HEK293 (cell line): ENCODE measurements at regions of chr2 and their contacts with region 1.

Region 1: DNA sequence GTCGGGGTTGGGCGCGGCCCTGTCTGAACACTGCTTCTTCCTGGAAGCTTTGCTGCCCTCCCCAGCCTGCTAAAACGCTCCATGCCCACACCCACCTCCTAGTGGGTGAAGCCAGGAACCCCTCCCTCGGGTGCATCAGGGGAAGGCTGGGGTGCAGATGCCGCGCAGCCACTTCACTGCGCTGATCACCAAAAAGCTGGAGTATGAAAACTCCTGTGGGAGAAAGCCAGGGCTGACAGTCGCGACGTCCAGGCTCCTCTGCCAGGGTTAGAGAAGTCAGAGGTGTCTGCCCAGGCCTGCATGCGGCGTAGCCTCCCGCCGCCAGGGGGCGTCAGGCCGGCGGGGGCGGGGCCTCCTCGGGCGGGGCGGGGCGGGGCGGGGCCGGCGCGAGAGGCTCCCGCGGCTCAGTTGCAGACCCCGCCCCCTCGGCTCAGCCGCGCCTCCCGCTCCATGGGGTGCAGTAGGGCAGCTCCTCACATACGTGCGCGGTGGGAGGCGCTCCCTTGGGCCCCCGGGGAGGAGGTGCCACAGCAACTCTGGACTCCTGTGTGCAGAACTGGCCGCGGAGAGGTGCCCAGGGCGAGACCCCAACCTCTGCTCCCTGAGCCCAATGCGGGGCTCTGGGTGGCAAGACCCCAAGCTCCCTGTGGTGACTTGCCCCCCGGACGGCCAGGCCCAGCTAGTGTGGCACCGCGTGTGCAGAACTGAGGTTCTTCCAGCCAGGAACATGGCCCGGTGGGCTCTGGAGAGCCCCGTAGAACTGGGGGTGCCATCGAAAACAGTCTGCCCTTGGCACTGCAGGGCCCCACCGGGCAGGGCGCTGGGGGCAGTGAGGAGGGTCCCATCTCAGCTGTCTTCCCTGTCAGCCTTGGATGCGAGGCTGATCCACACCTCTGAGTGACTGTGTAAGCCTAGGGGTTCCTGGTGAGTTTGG is 1.8 kb upstream of the RNPEPL1 start:
- H3K4me3 ChIP-seq: peak overlapping the region; percentile 38
- H3K27ac ChIP-seq: peak overlapping the region; percentile 76
- H3K4me1 ChIP-seq: peaks cover 4% of the 10 kb centered on the region
- CTCF ChIP-seq: peak; percentile 87

Region 2: DNA sequence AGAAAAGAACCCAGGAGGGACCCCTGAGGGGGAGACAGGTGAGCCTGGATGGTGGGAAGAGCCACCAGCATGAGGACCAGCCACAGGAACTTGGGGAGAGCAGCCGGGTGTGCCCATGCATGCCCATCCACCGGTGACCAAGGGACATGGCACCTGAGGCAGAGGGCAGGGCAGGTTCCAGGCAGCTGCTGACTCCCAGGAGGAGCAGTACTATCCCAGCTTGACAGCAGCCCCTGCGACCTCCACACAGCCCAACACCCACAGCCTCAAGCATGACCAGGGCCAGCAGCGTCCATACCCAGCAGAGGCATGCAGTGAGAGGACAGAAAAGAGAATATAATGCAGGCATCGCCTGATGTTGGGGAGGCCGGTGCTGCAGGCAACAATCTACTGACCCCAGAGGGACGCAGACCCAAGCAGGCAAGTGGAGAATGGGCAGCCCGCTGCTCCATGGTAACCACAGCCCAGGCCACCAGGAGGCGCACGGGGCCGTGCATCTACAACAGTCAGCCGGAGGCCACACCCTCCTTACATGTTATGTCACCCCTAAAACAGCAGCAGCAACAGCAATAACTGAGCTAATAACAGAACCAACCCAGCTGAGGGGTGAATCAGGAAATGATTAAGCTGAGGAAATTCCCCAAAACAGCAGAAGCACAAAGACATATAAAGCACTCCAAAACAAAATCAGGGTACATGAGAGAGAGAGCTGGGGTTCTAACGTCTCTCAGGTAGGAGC is 52.8 kb before region 1 on chr2:
- CTCF ChIA-PET with region 1: interaction called, 10 read pairs
- POLR2A ChIA-PET with region 1: no interaction called
- H3K4me3 ChIP-seq: no peak overlapping the region
- H3K27ac ChIP-seq: no peak overlapping the region
- H3K4me1 ChIP-seq: no peaks in the 10 kb centered on the region
- CTCF ChIP-seq: peak; percentile 67

Region 3: DNA sequence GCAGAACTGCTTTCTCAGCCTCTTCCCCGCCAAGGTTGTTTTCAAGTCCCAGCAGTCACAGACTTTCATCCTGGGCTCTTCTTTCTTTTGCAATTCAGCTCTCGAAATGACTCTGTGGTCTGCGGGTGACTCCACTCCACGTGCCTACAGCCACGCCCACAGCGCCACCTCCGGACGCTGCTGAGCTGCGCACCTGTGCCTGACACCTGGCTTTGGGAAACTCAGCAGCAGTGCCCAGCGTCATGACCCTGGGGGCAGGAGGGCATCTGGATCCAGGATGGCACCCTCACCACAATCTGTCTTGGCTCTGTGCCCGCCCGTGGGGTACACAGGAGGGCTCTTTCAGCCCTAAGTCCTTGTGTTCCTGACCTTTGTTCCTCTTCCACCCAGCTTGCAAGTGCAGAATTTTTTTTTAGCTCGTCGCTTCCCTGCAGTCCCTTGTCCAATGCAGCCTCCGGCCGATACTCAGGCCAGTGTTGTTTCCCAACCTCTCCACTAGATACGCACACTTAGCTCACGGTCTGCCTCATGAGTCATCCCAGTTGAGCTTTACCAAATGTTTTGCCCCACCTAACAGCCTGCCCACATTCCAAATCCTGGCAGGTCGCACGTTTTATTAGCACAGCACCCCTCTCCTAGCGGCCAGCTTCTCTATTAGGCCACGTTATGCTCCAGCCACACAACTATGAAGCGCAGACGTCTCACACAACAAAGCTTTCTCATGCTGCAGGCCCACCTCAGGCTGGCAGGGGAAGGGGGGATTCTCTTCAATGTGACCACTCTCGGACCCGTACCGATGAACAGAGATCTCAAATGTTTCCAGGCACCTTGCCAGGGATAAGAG is 13.5 kb after region 1 on chr2:
- CTCF ChIA-PET with region 1: interaction called, 34 read pairs
- POLR2A ChIA-PET with region 1: interaction called, 53 read pairs
- H3K4me3 ChIP-seq: no peak overlapping the region
- H3K27ac ChIP-seq: no peak overlapping the region
- H3K4me1 ChIP-seq: peaks cover 9% of the 10 kb centered on the region
- CTCF ChIP-seq: 0 out of 2 replicates have a peak, but pooled peaks have one; percentile 14

Region 4: DNA sequence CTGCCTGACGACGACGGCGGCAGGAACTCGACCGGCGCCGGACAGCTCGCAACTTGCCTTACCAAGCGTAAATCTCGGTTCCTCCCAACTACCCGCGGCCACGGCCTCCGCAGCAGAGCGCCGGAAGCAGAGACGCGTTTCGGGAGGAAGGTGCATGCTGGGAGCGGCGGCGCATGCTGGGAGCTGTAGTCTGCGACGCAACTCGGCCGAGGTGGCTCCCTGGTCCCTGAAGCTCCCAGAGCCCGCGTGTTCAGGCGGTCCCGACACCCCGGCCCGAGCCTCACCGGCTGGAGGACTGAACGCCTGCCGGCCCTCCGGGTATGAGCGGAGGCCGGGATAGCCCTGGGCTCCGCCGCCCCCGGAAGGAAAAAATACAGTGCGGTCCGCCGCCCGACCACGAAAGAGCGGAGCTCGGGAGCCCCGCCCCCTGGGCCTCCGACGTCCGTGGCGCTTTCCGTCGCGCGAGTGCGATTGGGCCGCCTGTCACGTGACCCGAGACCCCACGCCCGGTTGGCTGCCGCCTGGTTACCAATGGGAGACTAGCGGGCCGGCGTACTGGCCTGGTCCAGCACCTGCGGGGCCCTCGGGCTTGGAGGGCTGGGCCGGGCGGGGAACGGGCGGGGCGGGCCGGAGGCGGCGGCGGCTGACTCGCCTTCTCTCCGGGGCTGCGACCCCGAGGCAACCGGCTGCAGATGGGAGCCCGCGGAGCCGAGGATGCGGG is 19.9 kb after region 1 on chr2 and contains the start of gene CAPN10:
- CTCF ChIA-PET with region 1: interaction called, 34 read pairs
- POLR2A ChIA-PET with region 1: interaction called, 53 read pairs
- H3K4me3 ChIP-seq: peak within 1 kb of the TSS; percentile 97
- H3K27ac ChIP-seq: peak within 1 kb of the TSS; percentile 78
- H3K4me1 ChIP-seq: peaks cover 13% of the 10 kb centered on the region
- CTCF ChIP-seq: peak; percentile 14; the same call in 1 of the 2 replicates